Caco-2 (cell line): ENCODE measurements at regions of chr14 and their contacts with region 1.

Region 1: DNA sequence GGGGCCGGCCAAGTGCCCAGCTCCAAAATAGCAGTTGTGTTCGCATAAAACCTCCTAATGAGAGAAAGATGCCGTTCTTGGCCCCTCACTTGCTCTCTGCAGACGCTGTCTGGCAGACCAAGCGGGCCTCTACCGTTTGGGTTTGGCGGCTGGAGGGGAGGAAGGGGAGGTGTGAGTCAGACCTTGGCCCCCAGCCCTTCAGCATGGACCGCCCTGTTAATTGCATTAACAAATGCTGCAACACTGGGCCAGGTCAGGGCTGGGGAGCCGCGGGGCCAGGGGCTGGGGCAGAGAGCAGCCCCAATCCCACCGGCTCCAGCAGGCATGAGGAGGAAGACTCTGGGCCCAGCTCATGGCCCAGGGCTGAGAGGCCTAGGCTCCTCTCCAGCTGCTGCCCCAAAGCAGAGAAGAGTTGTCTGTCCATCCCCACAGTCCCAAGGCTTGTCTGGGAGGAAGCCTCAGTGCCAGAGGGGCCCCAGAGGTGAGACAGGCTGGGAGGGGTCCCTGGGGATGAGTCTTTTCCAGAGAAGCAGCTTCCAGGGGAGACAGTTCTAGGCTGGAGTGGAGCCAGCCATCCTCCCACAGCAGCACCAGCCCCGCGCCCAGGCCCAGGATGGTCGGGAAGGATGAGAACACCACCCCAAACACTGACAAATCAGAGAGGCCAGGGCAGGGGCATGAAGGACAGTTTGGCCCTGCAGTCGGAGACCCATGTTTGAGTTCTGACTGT is 16.9 kb downstream of the LTBP2 start:
- DNase-seq: no peak
- H3K4me3 ChIP-seq: no peak overlapping the region
- H3K4me3 Mint-ChIP-seq: no peak overlapping the region
- H3K27ac Mint-ChIP-seq: no peak overlapping the region
- H3K4me1 ChIP-seq: peaks cover 14% of the 10 kb centered on the region
- H3K4me1 Mint-ChIP-seq: peaks cover 11% of the 10 kb centered on the region
- H3K27me3 ChIP-seq: no peaks in the 10 kb centered on the region
- H3K27me3 Mint-ChIP-seq: no peaks in the 10 kb centered on the region
- CTCF ChIP-seq: no peak

Region 2: DNA sequence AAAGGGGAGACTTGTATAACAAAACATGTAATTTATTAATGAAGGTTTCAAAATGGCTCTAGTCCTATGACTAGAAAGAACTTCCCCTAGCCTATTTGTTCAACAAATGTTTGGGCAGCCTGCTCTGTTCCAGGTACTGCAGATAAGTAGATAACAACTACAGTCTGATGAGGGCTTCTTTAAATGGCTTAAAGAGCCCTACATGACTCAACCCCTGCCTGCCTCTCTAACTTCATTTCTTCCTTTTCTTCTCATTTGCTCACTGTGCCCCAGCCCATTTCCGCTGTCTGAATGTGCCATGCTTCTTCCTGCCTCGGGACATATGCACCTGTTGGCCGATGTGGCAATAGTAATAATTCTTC is 532.4 kb before region 1 on chr14:
- CTCF ChIA-PET with region 1: interaction called, 10 read pairs
- POLR2A ChIA-PET with region 1: no interaction called
- intact Hi-C with region 1: no loop called
- DNase-seq: no peak
- H3K4me3 ChIP-seq: no peak overlapping the region
- H3K4me3 Mint-ChIP-seq: no peak overlapping the region
- H3K27ac Mint-ChIP-seq: no peak overlapping the region
- H3K4me1 ChIP-seq: no peaks in the 10 kb centered on the region
- H3K4me1 Mint-ChIP-seq: peaks cover 7% of the 10 kb centered on the region
- H3K27me3 ChIP-seq: no peaks in the 10 kb centered on the region
- H3K27me3 Mint-ChIP-seq: no peaks in the 10 kb centered on the region
- CTCF ChIP-seq: no peak

Region 3: DNA sequence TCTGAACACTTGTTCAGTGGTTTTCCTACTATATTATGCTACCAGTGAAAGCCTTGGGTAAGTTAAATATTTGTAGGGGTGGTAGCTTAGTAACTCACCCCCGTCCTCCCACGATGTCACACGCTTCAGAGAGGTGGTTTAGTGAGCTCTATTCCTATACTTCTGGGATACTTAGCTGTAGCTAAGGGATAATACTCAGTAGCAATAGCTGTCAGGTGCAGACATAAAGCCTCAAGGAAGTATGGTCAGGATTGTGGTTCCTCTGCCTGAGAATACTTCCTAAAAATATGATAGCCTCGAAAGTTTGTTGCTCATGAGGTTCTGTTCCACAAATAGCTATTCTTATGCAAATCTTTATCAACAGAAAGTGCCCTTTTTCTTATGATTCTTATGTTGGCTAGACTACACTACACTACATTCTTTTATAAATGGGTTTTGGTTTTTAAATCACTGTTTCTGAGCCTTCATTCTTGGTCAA is 298.5 kb after region 1 on chr14:
- CTCF ChIA-PET with region 1: no interaction called
- POLR2A ChIA-PET with region 1: no interaction called
- intact Hi-C with region 1: no loop called
- DNase-seq: no peak
- H3K4me3 ChIP-seq: no peak overlapping the region
- H3K4me3 Mint-ChIP-seq: no peak overlapping the region
- H3K27ac Mint-ChIP-seq: no peak overlapping the region
- H3K4me1 ChIP-seq: peaks cover 12% of the 10 kb centered on the region
- H3K4me1 Mint-ChIP-seq: peaks cover 6% of the 10 kb centered on the region
- H3K27me3 ChIP-seq: no peaks in the 10 kb centered on the region
- H3K27me3 Mint-ChIP-seq: no peaks in the 10 kb centered on the region
- CTCF ChIP-seq: no peak